HEK293T (cell line): ENCODE measurements at regions of chr1 and their contacts with region 1.

Region 1: GRCh38 chr1:20151906-20152598 is 12.9 kb downstream of the PLA2G2F start:
- DNase-seq: peak; percentile 89

Region 2: DNA sequence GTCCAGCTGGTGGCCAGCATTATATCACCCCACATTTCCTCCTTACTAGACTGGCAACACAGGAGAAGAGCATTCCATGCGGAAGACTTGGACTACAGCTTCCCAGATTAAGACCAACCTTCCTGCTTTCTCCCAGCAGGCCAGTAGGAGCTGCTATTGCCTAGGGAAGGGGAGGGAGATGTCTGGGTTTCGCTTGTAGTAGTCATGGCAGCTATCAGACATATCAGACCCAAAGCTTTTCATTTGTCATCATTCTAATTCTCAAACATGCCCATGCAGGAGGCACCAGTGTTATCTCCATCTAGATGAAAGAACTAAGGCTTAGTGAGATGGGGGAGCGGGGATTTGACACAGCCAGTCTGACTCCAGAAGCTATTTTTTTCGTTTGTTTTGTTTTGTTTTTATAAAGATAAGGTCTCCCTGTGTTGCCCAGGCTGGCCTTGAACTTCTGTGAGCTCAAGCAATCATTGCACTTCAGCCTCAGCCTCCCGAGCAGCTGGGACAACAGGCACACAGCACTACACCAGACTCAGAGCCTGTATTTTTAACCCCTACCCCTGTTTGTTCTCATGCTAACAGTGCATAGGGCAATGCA is 177.1 kb before region 1 on chr1:
- CTCF ChIA-PET with region 1: interaction called, 11 read pairs
- POLR2A ChIA-PET with region 1: no interaction called
- DNase-seq: peak; percentile 80

Region 3: GRCh38 chr1:20380616-20381035 is 228.6 kb after region 1 on chr1:
- CTCF ChIA-PET with region 1: no interaction called
- POLR2A ChIA-PET with region 1: no interaction called
- DNase-seq: no peak